ENCODE measurements at regions of chr2 and their contacts with region 1.

Region 1: GRCh38 chr2:120066800-120067547 is 54.1 kb downstream of the EPB41L5 start:
- DNase-seq: peak in 1 of 2 donors; percentile 11
- ATAC-seq: peak; percentile 61 to 95
- H3K4me3 ChIP-seq: no peak overlapping the region
- H3K27ac ChIP-seq: peak overlapping the region in 2 of 4 donors; percentile 4 to 70
- H3K4me1 ChIP-seq: peaks cover 17% of the 10 kb centered on the region in 2 donors
- H3K27me3 ChIP-seq: no peaks in the 10 kb centered on the region
- CTCF ChIP-seq: no peak
- POLR2A ChIP-seq: no peak

Region 2: GRCh38 chr2:120012771-120013596 is 54.0 kb before region 1 on chr2 and contains the start of gene EPB41L5:
- in situ Hi-C with region 1: no loop called
- intact Hi-C with region 1: loop called (anchors 5 kb)
- DNase-seq: peak; percentile 84 to 91
- ATAC-seq: peak; percentile 92 to 94
- H3K4me3 ChIP-seq: peak within 1 kb of the TSS; percentile 88 to 98 (median 95)
- H3K27ac ChIP-seq: peak within 1 kb of the TSS; percentile 89 to 97 (median 92)
- H3K4me1 ChIP-seq: peaks cover 13 to 25% of the 10 kb centered on the region in 2 donors
- H3K27me3 ChIP-seq: no peaks in the 10 kb centered on the region
- CTCF ChIP-seq: peak in 1 of 5 experiments; percentile 15
- POLR2A ChIP-seq: peak; percentile 84 to 92
- total RNA-seq, gene EPB41L5: 8.3 to 41.1 (median 12.7) TPM

Measured in gastrocnemius medialis (tissue), 4 donors.